ENCODE measurements at regions of chr10 and their contacts with region 1.

Region 1: DNA sequence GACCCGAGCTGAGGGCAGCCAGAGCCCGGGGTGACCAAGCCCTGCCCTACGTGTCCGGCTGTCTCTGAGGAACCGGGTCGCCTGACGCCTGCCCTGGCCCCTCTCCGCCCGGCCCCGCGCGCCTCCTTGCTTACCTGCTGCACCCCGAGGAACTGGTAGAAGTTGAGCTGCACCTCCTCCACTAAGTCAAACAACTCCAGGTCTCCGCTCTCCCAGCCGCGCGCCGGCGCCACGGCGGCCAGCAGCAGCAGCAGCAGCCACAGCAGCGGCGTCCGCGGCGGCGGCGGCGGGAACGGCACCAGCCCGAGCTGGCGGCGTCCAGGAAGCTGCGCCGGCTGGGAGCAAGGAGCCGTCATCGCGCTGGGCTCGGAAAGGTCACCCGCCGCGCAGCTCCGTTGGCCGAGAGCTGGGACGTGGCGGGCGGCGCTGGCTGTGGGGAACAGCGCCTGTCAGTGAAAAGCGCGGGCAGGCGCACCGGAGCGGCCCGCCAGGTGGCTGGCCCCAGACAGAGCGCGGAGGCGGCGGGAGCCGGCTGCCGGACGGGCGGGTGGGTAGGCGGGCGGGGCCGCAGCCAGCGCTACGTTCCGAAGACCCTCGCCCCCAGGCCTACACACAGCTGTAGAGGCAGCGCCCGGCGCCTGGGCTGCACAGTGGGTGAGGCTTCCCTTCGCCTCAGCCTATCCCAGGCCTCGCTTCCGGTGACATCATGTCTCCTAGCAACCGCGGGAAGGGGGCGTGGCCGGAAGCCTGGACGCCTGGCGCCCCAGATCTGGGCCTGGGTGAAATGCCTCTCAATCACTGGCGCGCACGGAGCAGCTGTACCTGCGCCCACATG is at the start of gene DNAJC1:
- DNase-seq: peak; percentile 92
- ATAC-seq: peak; percentile 98
- H3K4me3 ChIP-seq: peak within 1 kb of the TSS; percentile 72 to 93 (median 83)
- H3K27ac ChIP-seq: peak within 1 kb of the TSS; percentile 84
- H3K4me1 ChIP-seq: peaks cover 20% of the 10 kb centered on the region
- H3K27me3 ChIP-seq: peaks cover 0 to 6% of the 10 kb centered on the region in 2 experiments; a peak in 1 of 5 replicates
- CTCF ChIP-seq: peak; percentile 8; the same call in 1 of the 2 replicates
- EP300 ChIP-seq: no peak
- POLR2A ChIP-seq: peak; percentile 66 to 77
- RAD21 ChIP-seq: peak; percentile 46; the same call in 1 of the 2 replicates
- total RNA-seq, gene DNAJC1: 8.8 and 16.6 TPM in 2 replicates

Region 2: GRCh38 chr10:22228943-22229801 is 225.9 kb after region 1 on chr10:
- CTCF ChIA-PET with region 1: no interaction called
- POLR2A ChIA-PET with region 1: no interaction called
- in situ Hi-C with region 1: no loop called
- intact Hi-C with region 1: loop called (anchors 2 kb)
- DNase-seq: peak; percentile 80
- ATAC-seq: peak; percentile 97
- H3K4me3 ChIP-seq: peak overlapping the region; percentile 81 to 91 (median 81)
- H3K27ac ChIP-seq: peak overlapping the region; percentile 82
- H3K4me1 ChIP-seq: peaks cover 5% of the 10 kb centered on the region; the same call in 1 of the 2 replicates
- H3K27me3 ChIP-seq: peaks cover 0 to 14% of the 10 kb centered on the region in 2 experiments; a peak in 2 of 5 replicates
- CTCF ChIP-seq: no peak
- EP300 ChIP-seq: no peak
- POLR2A ChIP-seq: no peak
- RAD21 ChIP-seq: no peak

Region 3: GRCh38 chr10:22436884-22437619 is 433.8 kb after region 1 on chr10:
- CTCF ChIA-PET with region 1: no interaction called
- POLR2A ChIA-PET with region 1: no interaction called
- in situ Hi-C with region 1: no loop called
- intact Hi-C with region 1: loop called (anchors 10 kb)
- DNase-seq: peak; percentile 10
- ATAC-seq: peak; percentile 87
- H3K4me3 ChIP-seq: peak overlapping the region; percentile 57 to 74 (median 67)
- H3K27ac ChIP-seq: no peak overlapping the region
- H3K4me1 ChIP-seq: peaks cover 15% of the 10 kb centered on the region
- H3K27me3 ChIP-seq: peaks cover 0 to 16% of the 10 kb centered on the region in 2 experiments; a peak in 4 of 5 replicates
- CTCF ChIP-seq: no peak
- EP300 ChIP-seq: no peak
- POLR2A ChIP-seq: no peak
- RAD21 ChIP-seq: no peak

Region 4: DNA sequence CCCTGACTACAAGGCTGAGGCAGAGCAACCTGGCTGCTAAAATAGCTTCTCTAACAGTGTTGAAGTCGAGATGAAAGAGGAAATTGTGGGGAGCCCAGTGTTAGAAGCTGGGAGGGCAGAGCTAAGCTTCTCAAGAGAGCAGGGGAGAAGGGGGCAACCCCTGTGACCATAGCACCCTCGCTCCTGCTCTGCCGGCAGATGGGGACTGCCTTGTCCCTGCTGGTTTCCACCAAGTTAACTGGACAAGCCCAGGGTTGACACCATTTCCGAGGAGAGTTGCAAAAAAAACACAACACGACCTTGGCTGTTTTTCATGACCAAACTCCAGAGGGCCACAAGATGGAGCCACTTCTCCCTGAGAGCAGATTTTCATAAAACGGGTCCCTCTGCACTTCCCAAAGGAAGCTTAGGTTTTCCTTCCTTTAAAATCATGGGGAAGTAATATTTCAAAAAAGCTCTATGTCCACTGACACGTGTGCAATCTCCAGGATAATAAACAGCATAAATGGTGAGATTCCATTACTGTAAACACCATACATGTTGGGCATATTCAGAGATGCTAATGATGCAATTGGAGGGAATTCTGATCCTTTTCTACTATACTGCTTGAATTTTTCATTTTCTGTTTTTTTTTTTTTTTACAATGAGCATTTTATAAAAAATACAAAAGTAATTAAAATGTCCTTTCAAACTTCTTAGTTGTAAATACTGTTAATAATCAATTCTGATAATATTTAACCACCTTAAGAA is 570.7 kb after region 1 on chr10:
- CTCF ChIA-PET with region 1: no interaction called
- POLR2A ChIA-PET with region 1: no interaction called
- in situ Hi-C with region 1: loop called (anchors 25 kb)
- intact Hi-C with region 1: loop called (anchors 10 kb)
- DNase-seq: peak; percentile 28
- ATAC-seq: peak; percentile 47; the same call in 1 of the 3 replicates
- H3K4me3 ChIP-seq: no peak overlapping the region
- H3K27ac ChIP-seq: no peak overlapping the region
- H3K4me1 ChIP-seq: no peaks in the 10 kb centered on the region
- H3K27me3 ChIP-seq: no peaks in the 10 kb centered on the region
- CTCF ChIP-seq: peak; percentile 72
- EP300 ChIP-seq: no peak
- POLR2A ChIP-seq: no peak
- RAD21 ChIP-seq: peak; percentile 54

Region 5: GRCh38 chr10:23067939-23068775 is 1064.9 kb after region 1 on chr10:
- CTCF ChIA-PET with region 1: no interaction called
- POLR2A ChIA-PET with region 1: no interaction called
- in situ Hi-C with region 1: no loop called
- intact Hi-C with region 1: loop called (anchors 5 kb)
- DNase-seq: peak; percentile 51
- ATAC-seq: peak; percentile 95
- H3K4me3 ChIP-seq: no peak overlapping the region
- H3K27ac ChIP-seq: no peak overlapping the region
- H3K4me1 ChIP-seq: no peaks in the 10 kb centered on the region; the same call in 1 of the 2 replicates
- H3K27me3 ChIP-seq: 0 out of 5 replicates have a peak, but pooled peaks cover 0 to 5% of the 10 kb centered on the region in 2 experiments
- CTCF ChIP-seq: peak; percentile 78
- EP300 ChIP-seq: no peak
- POLR2A ChIP-seq: no peak
- RAD21 ChIP-seq: 0 out of 2 replicates have a peak, but pooled peaks have one; percentile 15

Measured in HepG2 (cell line).